Activated CD4-positive, alpha-beta T cell treated with anti-CD3 and anti-CD28 coated beads, Interleukin-2, amount 10 ng/mL, durations not matched to agents 24 days and 14 days (primary cell): ENCODE measurements at regions of chr6 and their contacts with region 1.

Region 1: GRCh38 chr6:4018172-4018905 is 60.6 kb downstream of the FAM217A start:
- DNase-seq: peak; percentile 99
- H3K4me3 Mint-ChIP-seq: peak overlapping the region; percentile 94
- H3K27ac Mint-ChIP-seq: peak overlapping the region; percentile 98
- H3K4me1 Mint-ChIP-seq: peaks cover 46% of the 10 kb centered on the region
- H3K27me3 Mint-ChIP-seq: no peaks in the 10 kb centered on the region

Region 2: GRCh38 chr6:3118353-3119039 is 899.8 kb before region 1 on chr6 and contains the start of gene BPHL:
- intact Hi-C with region 1: loop called (anchors 5 kb)
- DNase-seq: peak; percentile 100
- H3K4me3 Mint-ChIP-seq: peak within 1 kb of the TSS; percentile 89
- H3K27ac Mint-ChIP-seq: peak within 1 kb of the TSS; percentile 91
- H3K4me1 Mint-ChIP-seq: peaks cover 14% of the 10 kb centered on the region
- H3K27me3 Mint-ChIP-seq: peaks cover 3% of the 10 kb centered on the region
- total RNA-seq, gene BPHL: 6.8 and 7.7 TPM in 2 replicates

Region 3: GRCh38 chr6:4055420-4056041 is 37.2 kb after region 1 on chr6:
- intact Hi-C with region 1: loop called (anchors 1 kb)
- DNase-seq: peak; percentile 71
- H3K4me3 Mint-ChIP-seq: no peak overlapping the region
- H3K27ac Mint-ChIP-seq: no peak overlapping the region
- H3K4me1 Mint-ChIP-seq: peaks cover 23% of the 10 kb centered on the region
- H3K27me3 Mint-ChIP-seq: no peaks in the 10 kb centered on the region

Region 4: DNA sequence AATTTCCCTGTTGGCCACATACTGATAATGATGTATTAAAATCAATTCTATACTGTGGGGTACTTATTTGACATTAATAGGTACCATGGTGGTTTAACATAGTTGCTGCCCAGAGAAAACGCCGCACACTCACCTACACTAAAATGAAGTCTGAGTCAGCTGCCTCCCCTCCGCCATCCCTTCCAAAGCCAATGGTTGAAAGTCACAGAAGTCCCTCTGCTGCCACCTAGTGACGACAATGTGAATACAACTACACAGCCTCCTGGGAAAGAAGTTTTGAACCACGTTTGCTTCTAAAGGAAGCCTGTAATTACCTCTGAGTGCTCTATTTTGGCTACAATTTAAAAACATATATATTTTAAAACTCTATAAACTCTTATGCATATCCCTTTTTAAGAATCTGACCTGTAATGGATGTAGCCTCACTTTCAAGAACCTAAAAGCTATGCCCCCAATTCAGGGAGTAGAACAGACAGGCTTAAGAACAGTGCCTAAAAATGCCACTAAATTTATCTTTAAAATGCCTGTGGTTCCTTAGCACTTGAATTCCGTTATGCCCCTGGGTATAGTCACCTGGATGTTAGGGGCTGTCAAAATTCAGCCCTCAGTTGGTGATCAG is 137.6 kb after region 1 on chr6:
- intact Hi-C with region 1: loop called (anchors 5 kb)
- DNase-seq: peak; percentile 94
- H3K4me3 Mint-ChIP-seq: no peak overlapping the region
- H3K27ac Mint-ChIP-seq: peak overlapping the region; percentile 56
- H3K4me1 Mint-ChIP-seq: peaks cover 4% of the 10 kb centered on the region
- H3K27me3 Mint-ChIP-seq: peaks cover 7% of the 10 kb centered on the region

Region 5: DNA sequence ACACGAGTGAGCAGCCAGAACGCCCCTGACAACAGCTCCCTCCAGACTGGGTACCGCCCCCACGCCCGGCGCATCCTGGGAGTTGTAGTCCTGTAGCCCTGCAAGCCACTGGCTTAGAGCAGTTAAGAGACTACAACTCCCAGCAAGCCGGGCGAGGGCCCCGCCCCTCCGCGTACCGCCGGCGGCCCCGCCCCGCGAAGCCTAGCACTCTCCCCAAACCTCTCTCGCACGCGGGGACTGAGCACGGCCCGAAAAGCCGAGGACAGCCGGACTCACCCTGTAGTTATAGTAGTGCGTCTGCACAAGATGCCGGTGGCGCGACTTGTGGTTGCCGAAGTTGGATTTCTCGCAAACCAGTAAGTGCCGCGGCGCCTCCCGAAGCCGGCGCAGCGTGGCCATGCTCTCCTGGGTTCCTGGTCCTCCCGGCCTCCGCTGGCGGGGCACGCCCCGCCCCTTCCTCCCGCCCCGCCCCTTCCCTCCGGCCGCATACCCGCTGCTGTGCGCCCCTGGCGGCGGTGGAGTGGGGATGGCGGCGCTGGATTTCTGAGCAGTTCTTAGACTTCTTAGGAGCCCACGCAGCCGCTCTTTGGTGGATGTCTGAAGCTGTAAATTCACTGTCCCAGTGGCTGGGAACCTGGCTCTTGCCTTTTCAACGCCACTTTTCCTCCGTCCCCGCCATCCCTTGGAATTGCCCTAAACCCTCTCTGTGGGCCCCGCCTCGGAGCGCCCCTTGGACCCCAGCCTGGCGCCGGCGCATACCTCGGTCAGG is 985.4 kb after region 1 on chr6 and contains the start of gene RPP40:
- intact Hi-C with region 1: loop called (anchors 5 kb)
- DNase-seq: peak; percentile 100
- H3K4me3 Mint-ChIP-seq: peak within 1 kb of the TSS; percentile 95
- H3K27ac Mint-ChIP-seq: peak within 1 kb of the TSS; percentile 98
- H3K4me1 Mint-ChIP-seq: peaks cover 12% of the 10 kb centered on the region
- H3K27me3 Mint-ChIP-seq: no peaks in the 10 kb centered on the region
- total RNA-seq, gene RPP40: 14.2 and 16.4 TPM in 2 replicates